GM18951 (cell line): ENCODE measurements at regions of chr2 and their contacts with region 1.

Region 1: GRCh38 chr2:170973492-170974303 is 44.6 kb downstream of the GORASP2 start:
- POLR2A ChIP-seq: peak; percentile 76

Region 2: GRCh38 chr2:170685591-170685990 is 288.1 kb before region 1 on chr2:
- in situ Hi-C with region 1: no loop called
- POLR2A ChIP-seq: no peak

Region 3: GRCh38 chr2:171046048-171046560 is 72.4 kb after region 1 on chr2:
- in situ Hi-C with region 1: no loop called
- POLR2A ChIP-seq: no peak

Region 4: DNA sequence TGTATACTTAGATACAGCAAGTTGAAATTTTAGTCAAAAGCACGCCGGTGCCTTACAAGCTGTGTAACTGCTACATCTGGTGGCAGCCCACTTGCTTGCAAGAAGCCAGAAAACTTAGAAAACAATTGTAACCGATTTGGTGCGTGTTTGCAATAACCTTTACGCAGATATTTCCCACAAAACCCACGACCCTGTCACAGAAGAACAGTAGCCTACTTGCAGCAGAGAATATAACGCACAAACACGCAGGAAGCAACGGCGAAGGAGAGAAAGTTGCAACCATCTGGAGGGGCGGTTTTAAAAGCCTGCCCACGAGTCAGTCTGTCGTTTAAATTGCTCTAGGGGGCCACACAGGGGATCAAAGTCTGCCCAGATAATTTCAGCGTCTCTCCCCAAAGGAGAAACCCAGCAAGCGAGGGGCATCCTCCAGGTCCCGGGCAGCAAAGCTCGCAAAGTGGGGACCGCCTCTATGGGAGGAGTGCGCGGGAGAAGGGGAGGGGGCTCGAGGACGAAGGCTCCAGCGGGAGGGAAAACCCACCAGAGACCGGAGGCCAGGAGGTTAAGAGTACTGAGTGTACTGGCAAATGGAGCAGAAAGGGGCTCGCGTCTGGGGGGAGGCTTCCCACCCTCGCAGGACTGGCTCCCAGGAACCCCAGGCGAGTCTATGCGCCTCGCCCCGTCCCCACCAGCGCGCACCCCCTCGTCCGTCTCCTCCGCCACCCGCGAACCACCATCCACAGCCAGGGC is 185.8 kb after region 1 on chr2:
- in situ Hi-C with region 1: loop called (anchors 10 kb)
- POLR2A ChIP-seq: peak; percentile 58

Region 5: GRCh38 chr2:171320208-171320621 is 346.5 kb after region 1 on chr2:
- in situ Hi-C with region 1: loop called (anchors 10 kb)
- POLR2A ChIP-seq: peak; percentile 44

Region 6: DNA sequence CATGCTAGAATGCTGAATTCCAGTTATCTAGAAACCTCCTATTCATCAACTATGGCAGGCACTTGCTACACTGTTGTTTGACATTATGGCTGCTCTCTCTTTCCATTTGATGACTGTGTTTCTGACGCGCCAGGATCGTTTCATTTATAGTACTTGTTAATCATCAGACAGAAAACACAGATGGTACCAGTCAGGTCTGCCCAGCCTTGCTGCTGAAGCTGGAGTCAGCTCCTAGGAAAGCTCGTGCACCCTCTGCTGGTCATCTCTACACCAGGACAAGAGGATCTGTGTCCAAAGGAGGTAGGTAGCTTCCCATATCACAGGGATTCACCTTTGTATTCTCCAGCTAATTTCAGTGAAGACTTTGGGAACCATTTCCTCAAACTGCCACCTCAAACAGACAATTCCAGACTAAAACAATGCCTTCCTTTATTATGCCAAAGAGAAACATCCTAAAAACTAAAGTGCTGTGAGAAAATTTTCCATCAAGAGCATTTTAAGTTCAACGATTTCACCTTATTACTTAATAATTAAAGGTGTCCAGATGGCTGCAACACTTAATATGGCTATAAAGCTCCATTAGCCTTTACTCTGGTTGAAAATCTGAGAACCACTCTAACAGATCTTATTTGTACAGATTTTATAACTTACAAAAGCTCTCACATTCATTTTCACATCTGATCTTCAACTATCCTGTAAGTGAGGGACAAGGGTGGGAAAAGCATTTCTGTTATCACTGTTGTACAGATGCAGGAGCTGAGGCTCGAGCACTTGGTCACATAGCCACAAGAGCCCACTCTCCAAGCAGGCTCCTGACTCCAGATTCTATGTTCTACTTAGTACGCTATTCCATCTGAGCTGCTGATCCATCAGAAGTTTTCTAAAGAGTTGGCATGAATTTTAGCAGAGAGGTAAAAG is 442.6 kb after region 1 on chr2:
- in situ Hi-C with region 1: loop called (anchors 10 kb)
- POLR2A ChIP-seq: peak; percentile 41

Region 7: GRCh38 chr2:171574149-171574795 is 600.6 kb after region 1 on chr2:
- in situ Hi-C with region 1: loop called (anchors 10 kb)
- POLR2A ChIP-seq: no peak